ENCODE measurements at regions of chr4 and their contacts with region 1.

Region 1: GRCh38 chr4:128782076-128782715 is 27.3 kb upstream of the JADE1 start:
- DNase-seq: peak; percentile 20 to 80 (median 59)
- ATAC-seq: peak; percentile 74 to 91 (median 83)
- H3K4me3 ChIP-seq: no peak overlapping the region
- H3K4me3 Mint-ChIP-seq: no peak overlapping the region
- H3K27ac ChIP-seq: no peak overlapping the region
- H3K27ac Mint-ChIP-seq: no peak overlapping the region
- H3K4me1 ChIP-seq: no peaks in the 10 kb centered on the region
- H3K4me1 Mint-ChIP-seq: no peaks in the 10 kb centered on the region
- H3K27me3 ChIP-seq: no peaks in the 10 kb centered on the region
- H3K27me3 Mint-ChIP-seq: peaks cover 0 to 3% of the 10 kb centered on the region in 2 donors

Region 2: DNA sequence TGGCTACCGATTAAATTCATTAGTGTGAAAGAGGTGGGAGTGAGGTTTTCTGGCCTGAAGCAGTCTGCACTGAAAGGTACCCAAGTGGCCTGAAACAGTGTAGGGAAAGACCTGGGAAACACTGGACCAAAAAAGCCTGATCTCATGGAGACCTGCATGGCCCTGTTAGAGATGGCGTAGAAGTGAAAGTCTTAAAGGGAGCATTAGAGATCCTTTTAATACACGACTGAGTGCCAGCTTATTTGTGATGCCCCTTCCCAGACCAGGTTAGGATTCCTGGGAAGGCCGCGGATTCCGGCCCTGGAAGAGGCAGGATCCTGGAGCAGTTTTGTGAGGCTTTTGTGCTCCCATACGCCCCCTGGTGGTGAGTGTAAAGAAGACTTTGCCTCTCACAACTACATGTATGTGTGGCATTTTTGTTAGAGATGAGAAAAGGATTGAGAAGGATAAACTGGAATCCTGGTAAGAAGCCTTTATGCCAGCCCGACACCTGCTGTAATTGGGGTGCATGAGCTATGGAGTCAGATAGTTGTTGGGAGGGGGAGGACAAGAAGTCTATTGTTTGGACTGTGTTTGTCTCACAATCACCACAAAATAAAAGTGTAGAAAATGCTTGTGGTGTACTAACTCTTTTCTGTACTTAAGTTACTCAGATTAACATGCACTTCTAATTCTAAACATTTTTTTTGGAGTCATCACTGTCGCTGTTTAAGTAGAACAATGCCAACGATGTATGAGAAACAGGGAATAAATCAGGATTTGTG is 81.3 kb after region 1 on chr4:
- CTCF ChIA-PET with region 1: interaction called, 6 to 20 read pairs
- POLR2A ChIA-PET with region 1: no interaction called
- DNase-seq: peak in 34 of 35 experiments; percentile 20 to 83 (median 53)
- ATAC-seq: peak in 2 of 4 experiments; percentile 30 to 35
- H3K4me3 ChIP-seq: no peak overlapping the region
- H3K4me3 Mint-ChIP-seq: no peak overlapping the region
- H3K27ac ChIP-seq: peak overlapping the region; percentile 51
- H3K27ac Mint-ChIP-seq: peak overlapping the region in 1 of 2 donors; percentile 36
- H3K4me1 ChIP-seq: peaks cover 9 to 28% of the 10 kb centered on the region in 2 experiments
- H3K4me1 Mint-ChIP-seq: peaks cover 38 to 56% (median 39%) of the 10 kb centered on the region in 3 donors
- H3K27me3 ChIP-seq: no peaks in the 10 kb centered on the region
- H3K27me3 Mint-ChIP-seq: no peaks in the 10 kb centered on the region

Region 3: DNA sequence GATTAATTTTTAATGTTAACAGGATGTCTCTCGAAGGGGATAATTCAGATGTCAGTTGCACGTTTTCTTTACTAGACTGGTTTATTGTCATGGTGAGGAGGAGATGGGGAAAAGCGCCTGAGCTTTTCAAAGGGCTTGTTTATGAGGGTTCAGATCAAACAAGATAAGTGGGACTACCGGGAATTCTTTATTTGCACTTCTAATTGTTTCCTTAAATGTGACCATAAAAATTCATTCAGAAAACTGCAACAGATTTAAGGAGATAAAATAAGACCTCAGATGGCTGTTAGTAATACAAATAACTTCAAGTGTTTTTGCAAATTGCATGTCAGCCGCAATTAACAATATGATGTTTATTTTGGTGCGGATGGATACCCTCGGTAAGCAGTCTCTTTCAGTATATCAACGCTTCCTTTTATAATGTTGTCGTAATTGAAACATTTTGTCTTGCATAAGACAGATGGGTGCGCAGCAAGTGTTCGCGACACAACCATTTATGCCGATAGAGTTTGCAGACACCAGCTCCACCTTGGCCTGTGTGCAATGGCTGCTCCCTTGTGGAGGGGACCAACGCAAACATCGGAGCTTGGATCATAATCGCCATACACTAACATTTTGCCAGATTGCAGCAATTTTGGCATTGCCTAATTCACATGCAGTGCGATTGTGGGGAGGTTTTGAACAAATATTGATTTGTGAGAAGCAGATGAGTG is 464.8 kb after region 1 on chr4:
- CTCF ChIA-PET with region 1: interaction called in 1 of 2 experiments, 10 read pairs
- POLR2A ChIA-PET with region 1: no interaction called
- DNase-seq: no peak
- ATAC-seq: no peak
- H3K4me3 ChIP-seq: no peak overlapping the region
- H3K4me3 Mint-ChIP-seq: no peak overlapping the region
- H3K27ac ChIP-seq: no peak overlapping the region
- H3K27ac Mint-ChIP-seq: no peak overlapping the region
- H3K4me1 ChIP-seq: no peaks in the 10 kb centered on the region
- H3K4me1 Mint-ChIP-seq: no peaks in the 10 kb centered on the region
- H3K27me3 ChIP-seq: peaks cover 0 to 2% of the 10 kb centered on the region in 2 experiments
- H3K27me3 Mint-ChIP-seq: peaks cover 6 to 10% of the 10 kb centered on the region in 2 donors